PC-3 (cell line): ENCODE measurements at regions of chr16 and their contacts with region 1.

Region 1: DNA sequence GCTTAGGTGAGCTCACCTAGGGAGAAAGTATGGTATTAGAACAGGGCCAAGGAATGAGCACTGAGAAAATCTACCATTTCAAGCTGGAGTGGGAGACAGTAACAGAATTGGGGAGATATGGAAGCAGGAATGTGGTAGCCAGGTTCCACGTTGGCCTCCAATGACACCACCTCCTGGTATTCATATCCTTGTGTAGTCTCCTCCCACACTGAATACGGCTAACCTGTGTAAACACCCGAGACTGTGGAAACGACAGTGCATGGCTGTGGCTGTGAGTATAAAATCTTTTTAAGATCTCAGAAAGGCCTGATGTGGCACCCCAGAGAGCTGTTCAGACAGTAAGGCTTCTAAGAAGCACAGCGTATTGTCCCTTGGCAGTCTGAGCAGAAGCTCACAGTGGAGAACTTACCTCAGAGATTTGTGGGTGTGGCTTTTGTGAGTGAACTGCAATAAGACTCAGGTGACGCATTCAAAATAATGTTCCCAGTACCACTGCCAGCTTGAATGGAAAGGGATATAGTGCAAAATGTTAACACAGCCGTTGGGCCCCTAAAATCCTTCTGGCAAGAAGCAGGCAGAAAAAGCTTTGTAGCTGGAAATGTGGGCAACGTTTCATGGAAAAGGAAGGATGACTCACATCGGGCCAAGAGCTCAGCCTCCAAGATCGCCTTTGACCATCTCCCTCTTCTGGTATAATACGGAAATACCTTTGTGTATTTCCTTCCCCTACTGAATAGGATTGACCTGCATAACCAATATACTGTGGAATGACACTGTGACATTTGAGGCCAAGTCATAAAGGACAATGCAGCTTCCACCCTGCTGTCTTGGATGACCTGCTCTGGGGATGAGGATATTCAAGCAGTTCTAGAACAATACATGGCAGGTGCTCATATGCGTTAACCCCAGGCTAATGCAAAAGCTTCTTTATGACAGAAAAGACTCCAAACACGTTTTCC is 14.3 kb downstream of the SDR42E1 start:
- DNase-seq: peak; percentile 79
- ATAC-seq: peak; percentile 59
- H3K4me3 ChIP-seq: peak overlapping the region; percentile 25
- H3K27ac ChIP-seq: peak overlapping the region; percentile 92
- H3K4me1 ChIP-seq: peaks cover 38% of the 10 kb centered on the region
- H3K27me3 ChIP-seq: no peaks in the 10 kb centered on the region
- CTCF ChIP-seq: peak; percentile 61

Region 2: DNA sequence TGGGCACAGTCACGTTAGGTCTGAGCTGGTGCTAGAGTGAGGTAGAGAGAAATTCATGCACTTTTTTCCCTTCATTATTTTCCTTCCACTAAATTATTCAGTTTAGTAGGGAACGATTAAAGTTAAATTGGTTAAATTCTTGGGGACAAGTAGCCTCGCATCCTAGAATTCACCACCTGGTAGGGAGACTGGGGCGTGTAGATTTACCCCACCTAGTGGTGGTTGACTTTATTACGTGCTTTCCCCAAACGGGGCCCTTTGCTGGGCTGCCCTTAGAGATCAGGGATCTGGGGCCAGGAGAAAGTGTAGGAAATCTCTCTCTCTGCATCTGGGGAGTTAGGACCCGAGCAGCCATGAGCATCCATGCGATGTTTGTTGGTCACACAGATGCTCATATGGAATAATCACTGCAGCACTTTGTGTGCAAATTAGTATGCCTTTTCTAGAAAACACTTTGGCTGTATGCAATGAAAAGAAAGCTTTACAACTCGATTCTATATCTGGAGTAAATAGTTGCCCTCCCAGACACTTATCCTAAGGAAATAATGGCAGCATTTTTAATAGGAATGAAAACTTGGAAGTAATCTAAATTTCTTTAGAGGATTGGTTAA is 110.9 kb before region 1 on chr16:
- CTCF ChIA-PET with region 1: interaction called, 13 read pairs
- POLR2A ChIA-PET with region 1: no interaction called
- intact Hi-C with region 1: loop called (anchors 1 kb)
- DNase-seq: peak; percentile 64
- ATAC-seq: peak; percentile 75
- H3K4me3 ChIP-seq: no peak overlapping the region
- H3K27ac ChIP-seq: no peak overlapping the region
- H3K4me1 ChIP-seq: peaks cover 3% of the 10 kb centered on the region
- H3K27me3 ChIP-seq: no peaks in the 10 kb centered on the region
- CTCF ChIP-seq: peak; percentile 63

Region 3: GRCh38 chr16:81891736-81892357 is 105.1 kb before region 1 on chr16:
- CTCF ChIA-PET with region 1: interaction called, 13 read pairs
- POLR2A ChIA-PET with region 1: no interaction called
- intact Hi-C with region 1: loop called (anchors 1 kb)
- DNase-seq: peak; percentile 63
- ATAC-seq: peak; percentile 94
- H3K4me3 ChIP-seq: no peak overlapping the region
- H3K27ac ChIP-seq: peak overlapping the region; percentile 62
- H3K4me1 ChIP-seq: peaks cover 13% of the 10 kb centered on the region
- H3K27me3 ChIP-seq: no peaks in the 10 kb centered on the region
- CTCF ChIP-seq: no peak

Region 4: GRCh38 chr16:81940781-81941560 is 56.0 kb before region 1 on chr16:
- CTCF ChIA-PET with region 1: interaction called, 28 read pairs
- POLR2A ChIA-PET with region 1: interaction called, 5 read pairs
- intact Hi-C with region 1: loop called (anchors 1 kb)
- DNase-seq: peak; percentile 63
- ATAC-seq: peak; percentile 78
- H3K4me3 ChIP-seq: no peak overlapping the region
- H3K27ac ChIP-seq: no peak overlapping the region
- H3K4me1 ChIP-seq: peaks cover 6% of the 10 kb centered on the region
- H3K27me3 ChIP-seq: no peaks in the 10 kb centered on the region
- CTCF ChIP-seq: peak; percentile 73

Region 5: DNA sequence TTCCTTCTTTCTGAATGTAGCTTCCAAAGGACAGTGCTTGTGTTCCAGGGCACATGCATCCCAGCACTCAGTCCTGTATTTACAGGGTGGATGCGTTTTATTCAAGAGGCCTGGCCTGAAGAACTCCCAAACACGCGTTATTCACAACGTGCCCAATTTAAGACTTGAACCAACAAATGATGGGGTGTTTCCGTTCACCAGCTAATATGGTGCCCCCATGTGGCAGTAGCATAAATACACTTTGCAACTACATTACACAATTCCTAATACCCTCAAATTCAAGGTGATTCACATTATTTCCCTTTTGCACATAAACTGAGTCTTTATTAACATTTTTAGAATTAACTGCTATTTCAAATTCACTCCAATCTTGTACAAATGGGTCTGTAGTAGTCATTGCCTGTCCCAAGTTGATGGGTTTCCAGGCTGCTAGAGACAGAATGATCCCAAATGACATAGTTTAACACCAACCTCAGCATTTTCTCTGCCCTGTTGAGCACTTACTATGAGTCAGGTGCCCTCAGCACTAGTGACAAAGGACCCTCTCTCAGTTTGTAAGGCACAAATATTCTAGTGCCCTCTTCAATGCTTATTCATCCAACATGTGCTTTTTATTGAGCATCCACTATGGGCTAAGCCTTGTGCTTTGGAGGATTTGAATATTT is 65.0 kb after region 1 on chr16:
- CTCF ChIA-PET with region 1: no interaction called
- POLR2A ChIA-PET with region 1: no interaction called
- intact Hi-C with region 1: loop called (anchors 1 kb)
- DNase-seq: peak; percentile 37
- ATAC-seq: no peak
- H3K4me3 ChIP-seq: no peak overlapping the region
- H3K27ac ChIP-seq: no peak overlapping the region
- H3K4me1 ChIP-seq: peaks cover 15% of the 10 kb centered on the region
- H3K27me3 ChIP-seq: no peaks in the 10 kb centered on the region
- CTCF ChIP-seq: peak; percentile 69